Ovary (tissue), 10 donors: ENCODE measurements at regions of chr15 and their contacts with region 1.

Region 1: DNA sequence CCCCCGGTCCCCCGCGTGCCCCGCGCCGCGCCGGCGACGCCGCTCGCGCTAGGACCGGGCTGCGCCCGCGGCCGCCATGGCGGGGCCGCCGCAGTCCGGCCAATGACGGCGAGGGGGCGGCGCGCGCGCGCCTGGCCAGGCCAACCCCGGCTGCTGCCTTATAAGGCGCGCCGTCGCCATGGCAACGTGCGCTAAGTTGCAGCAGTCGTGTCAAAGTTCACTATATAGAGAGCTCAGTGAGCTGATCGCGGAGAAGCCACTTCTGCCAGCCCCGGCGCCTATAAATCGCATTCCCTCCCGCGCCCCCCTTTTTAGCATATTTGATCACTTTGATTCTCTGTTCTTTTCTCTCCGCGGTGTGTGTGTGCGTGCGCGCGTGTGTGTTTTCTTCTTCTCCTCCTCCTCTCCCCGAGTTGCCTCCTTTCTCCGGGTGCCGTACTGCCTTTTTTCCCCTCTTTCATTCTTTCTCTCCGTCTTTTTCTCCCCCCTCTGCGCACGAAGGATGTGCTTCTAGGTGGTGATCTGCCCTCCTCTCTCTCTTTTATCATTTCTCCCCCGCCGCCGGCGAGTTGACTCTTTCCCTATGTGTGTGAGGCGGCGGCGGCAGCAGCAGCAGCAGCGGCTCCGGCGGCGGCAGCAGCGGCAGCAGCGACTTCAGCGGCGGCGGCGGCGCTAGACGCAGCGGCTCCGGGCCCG is at the start of gene NR2F2:
- DNase-seq: peak; percentile 97 to 99 (median 98)
- H3K4me3 ChIP-seq: peak within 1 kb of the TSS; percentile 73
- H3K27ac ChIP-seq: peak within 1 kb of the TSS; percentile 99
- H3K4me1 ChIP-seq: no peaks in the 10 kb centered on the region
- H3K27me3 ChIP-seq: no peaks in the 10 kb centered on the region
- CTCF ChIP-seq: no peak
- EP300 ChIP-seq: peak; percentile 57
- POLR2A ChIP-seq: peak; percentile 86
- total RNA-seq, gene NR2F2: 68.6 to 424 (median 343) TPM

Region 2: GRCh38 chr15:94670438-94671034 is 1660.1 kb before region 1 on chr15:
- intact Hi-C with region 1: loop called in 1 of 4 experiments (anchors 10 kb)
- DNase-seq: no peak
- H3K4me3 ChIP-seq: no peak overlapping the region
- H3K27ac ChIP-seq: peak overlapping the region in 1 of 2 donors; percentile 41
- H3K4me1 ChIP-seq: no peaks in the 10 kb centered on the region
- H3K27me3 ChIP-seq: no peaks in the 10 kb centered on the region
- CTCF ChIP-seq: peak; percentile 39 to 84 (median 73)
- EP300 ChIP-seq: no peak
- POLR2A ChIP-seq: no peak

Region 3: GRCh38 chr15:95266451-95267061 is 1064.0 kb before region 1 on chr15:
- intact Hi-C with region 1: loop called in 2 of 4 experiments (anchors 5 to 10 kb)
- DNase-seq: no peak
- H3K4me3 ChIP-seq: no peak overlapping the region
- H3K27ac ChIP-seq: no peak overlapping the region
- H3K4me1 ChIP-seq: peaks cover 3% of the 10 kb centered on the region
- H3K27me3 ChIP-seq: no peaks in the 10 kb centered on the region
- CTCF ChIP-seq: no peak
- EP300 ChIP-seq: no peak
- POLR2A ChIP-seq: no peak

Region 4: DNA sequence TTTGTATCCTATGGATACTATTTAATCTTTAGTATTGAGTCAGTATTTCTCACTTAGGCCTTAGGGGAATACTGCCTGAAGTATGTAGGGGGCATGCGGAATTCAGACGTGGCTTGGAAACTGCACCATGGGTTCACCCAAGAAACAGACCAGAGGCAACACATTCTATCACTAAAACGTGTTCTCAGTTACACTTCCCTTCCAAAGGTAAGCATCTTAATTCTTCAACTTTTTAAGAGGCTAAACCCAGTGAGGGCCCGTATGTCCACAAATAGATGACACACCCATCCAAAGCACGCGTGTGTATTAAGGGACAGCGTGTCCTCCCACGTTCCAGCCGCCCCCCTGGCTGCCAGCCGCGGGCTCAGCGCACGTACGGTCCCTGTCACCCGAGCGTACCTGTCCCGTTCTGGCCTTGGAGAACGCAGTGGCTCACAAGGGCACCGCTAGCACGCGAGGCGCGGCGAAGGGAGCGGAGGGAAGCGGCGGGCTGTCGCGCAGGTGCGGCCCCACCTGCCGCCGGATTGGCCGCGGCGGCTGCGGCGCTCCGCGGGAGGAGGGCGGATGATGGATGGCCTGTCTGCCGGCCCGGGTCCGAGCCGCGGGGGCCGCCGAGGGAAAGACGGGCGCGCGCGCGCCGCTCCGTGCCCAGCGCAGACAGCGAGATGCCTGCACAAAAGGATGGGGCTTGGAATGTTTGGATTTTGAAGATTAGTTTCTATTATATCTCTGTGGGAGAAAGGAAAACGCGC is 1004.0 kb before region 1 on chr15:
- intact Hi-C with region 1: loop called in 2 of 4 experiments (anchors 5 kb)
- DNase-seq: peak; percentile 70 to 84 (median 78)
- H3K4me3 ChIP-seq: peak overlapping the region; percentile 56
- H3K27ac ChIP-seq: peak overlapping the region; percentile 84 to 98
- H3K4me1 ChIP-seq: peaks cover 4% of the 10 kb centered on the region
- H3K27me3 ChIP-seq: no peaks in the 10 kb centered on the region
- CTCF ChIP-seq: no peak
- EP300 ChIP-seq: peak; percentile 17
- POLR2A ChIP-seq: peak; percentile 8

Region 5: GRCh38 chr15:95843241-95843910 is 487.2 kb before region 1 on chr15:
- intact Hi-C with region 1: loop called in 1 of 4 experiments (anchors 10 kb)
- DNase-seq: no peak
- H3K4me3 ChIP-seq: no peak overlapping the region
- H3K27ac ChIP-seq: peak overlapping the region; percentile 25 to 40
- H3K4me1 ChIP-seq: peaks cover 16% of the 10 kb centered on the region
- H3K27me3 ChIP-seq: no peaks in the 10 kb centered on the region
- CTCF ChIP-seq: no peak
- EP300 ChIP-seq: no peak
- POLR2A ChIP-seq: no peak

Region 6: GRCh38 chr15:96126859-96127258 is 203.7 kb before region 1 on chr15:
- intact Hi-C with region 1: no loop called
- DNase-seq: no peak
- H3K4me3 ChIP-seq: no peak overlapping the region
- H3K27ac ChIP-seq: no peak overlapping the region
- H3K4me1 ChIP-seq: no peaks in the 10 kb centered on the region
- H3K27me3 ChIP-seq: no peaks in the 10 kb centered on the region
- CTCF ChIP-seq: no peak
- EP300 ChIP-seq: no peak
- POLR2A ChIP-seq: no peak

Region 7: DNA sequence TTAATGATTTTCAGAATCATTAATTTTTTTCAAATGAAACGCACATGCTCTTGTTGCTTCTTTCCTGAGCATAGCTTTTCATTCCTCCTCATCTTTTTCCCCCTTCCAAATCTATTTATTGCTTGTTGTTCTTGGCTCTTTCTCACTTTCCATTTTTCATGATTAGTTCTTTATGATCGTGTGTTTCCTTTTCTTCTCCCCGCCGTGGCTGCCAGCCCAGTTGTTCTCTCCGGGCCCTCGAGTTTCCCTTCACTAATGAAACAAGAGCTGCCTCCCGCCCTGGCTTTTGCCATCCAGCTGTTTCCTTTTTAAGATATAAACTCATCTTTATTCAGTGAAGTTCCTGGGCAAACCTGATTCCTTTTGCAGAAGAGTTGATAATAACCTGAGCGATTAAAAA is 170.3 kb before region 1 on chr15:
- intact Hi-C with region 1: loop called in 2 of 4 experiments (anchors 10 kb)
- DNase-seq: peak; percentile 64 to 82 (median 74)
- H3K4me3 ChIP-seq: no peak overlapping the region
- H3K27ac ChIP-seq: peak overlapping the region; percentile 3 to 64
- H3K4me1 ChIP-seq: peaks cover 12% of the 10 kb centered on the region
- H3K27me3 ChIP-seq: no peaks in the 10 kb centered on the region
- CTCF ChIP-seq: no peak
- EP300 ChIP-seq: no peak
- POLR2A ChIP-seq: no peak

Region 8: DNA sequence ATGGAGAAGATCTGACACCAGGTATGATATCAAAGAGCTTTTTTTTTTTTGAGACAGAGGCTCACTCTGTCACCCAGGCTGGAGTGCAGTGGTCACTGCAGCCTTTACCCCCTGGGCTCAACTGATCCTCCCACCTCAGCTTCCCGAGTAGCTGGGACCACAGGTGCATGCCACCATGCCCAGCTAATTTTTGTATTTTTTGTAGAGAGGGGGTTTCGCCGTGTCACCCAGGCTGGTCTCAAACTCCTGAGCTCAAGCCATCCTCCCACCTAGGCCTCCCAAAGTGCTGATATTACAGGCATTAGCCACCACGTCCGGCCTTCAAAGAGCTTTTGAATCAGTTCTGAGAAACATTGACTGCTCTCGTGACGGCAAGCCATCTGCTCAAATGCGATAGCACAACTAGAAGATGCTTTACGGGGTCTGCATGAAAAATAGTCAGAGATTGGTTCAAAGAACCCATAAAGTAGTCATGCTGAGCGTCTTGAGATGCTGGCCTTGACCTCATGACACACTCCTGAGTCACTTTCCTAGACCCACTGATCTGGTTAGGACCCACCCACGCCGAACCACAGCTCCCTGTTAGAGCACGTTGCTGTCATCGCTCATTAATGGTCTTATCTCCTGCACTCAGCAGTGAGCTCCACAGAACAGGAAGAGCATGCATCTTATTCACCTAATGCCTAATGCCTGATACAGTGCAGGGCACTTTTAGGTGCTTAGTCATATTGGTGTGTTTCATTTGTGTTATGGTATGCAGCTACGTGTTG is 57.1 kb before region 1 on chr15:
- intact Hi-C with region 1: no loop called
- DNase-seq: no peak
- H3K4me3 ChIP-seq: no peak overlapping the region
- H3K27ac ChIP-seq: no peak overlapping the region
- H3K4me1 ChIP-seq: peaks cover 2% of the 10 kb centered on the region
- H3K27me3 ChIP-seq: no peaks in the 10 kb centered on the region
- CTCF ChIP-seq: no peak
- EP300 ChIP-seq: no peak
- POLR2A ChIP-seq: no peak

Region 9: DNA sequence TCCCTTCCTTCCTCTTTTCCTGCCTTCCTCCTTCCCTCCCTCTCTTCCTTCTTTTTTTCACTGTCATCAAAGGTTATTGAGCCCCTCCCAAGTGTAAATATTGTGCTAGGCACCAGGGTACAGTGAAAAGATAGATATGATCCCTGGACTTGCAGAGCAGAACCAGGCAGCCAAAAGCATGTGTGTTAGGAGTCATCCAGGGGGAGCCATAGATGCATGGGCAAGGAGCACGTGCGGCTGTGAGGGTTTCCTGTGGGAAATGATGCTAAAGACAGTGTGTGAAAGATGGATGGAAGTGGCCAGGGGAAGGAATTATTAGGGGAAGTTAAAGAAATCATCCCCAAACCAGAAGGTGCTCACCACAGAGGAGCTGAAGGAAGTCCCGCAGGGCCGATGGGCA is 65.1 kb after region 1 on chr15:
- intact Hi-C with region 1: no loop called
- DNase-seq: no peak
- H3K4me3 ChIP-seq: no peak overlapping the region
- H3K27ac ChIP-seq: no peak overlapping the region
- H3K4me1 ChIP-seq: peaks cover 4% of the 10 kb centered on the region
- H3K27me3 ChIP-seq: no peaks in the 10 kb centered on the region
- CTCF ChIP-seq: no peak
- EP300 ChIP-seq: no peak
- POLR2A ChIP-seq: no peak

Region 10: GRCh38 chr15:96448923-96449322 is 118.3 kb after region 1 on chr15:
- intact Hi-C with region 1: no loop called
- DNase-seq: no peak
- H3K4me3 ChIP-seq: no peak overlapping the region
- H3K27ac ChIP-seq: no peak overlapping the region
- H3K4me1 ChIP-seq: no peaks in the 10 kb centered on the region
- H3K27me3 ChIP-seq: no peaks in the 10 kb centered on the region
- CTCF ChIP-seq: no peak
- EP300 ChIP-seq: no peak
- POLR2A ChIP-seq: no peak